ENCODE measurements at regions of chr15 and their contacts with region 1.

Region 1: DNA sequence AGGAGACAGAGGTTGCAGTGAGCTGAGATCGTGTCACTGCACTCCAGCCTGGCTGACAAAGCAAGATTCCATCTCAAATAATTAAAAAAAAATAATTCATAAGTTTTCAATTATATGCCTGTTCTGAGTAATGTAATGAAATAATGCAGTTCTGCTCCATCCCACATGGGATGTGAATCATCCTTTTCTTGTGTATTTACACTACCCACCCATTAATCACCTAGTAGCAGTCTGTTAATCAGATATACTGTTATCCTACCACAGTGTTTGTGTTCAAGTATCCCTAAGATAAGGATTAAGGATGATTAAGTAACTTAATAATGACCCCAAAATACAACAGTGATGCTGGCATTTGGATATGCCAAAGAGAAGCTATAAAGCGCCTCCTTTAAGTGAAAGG is 38.8 kb downstream of the PIGB start:
- DNase-seq: no peak
- H3K4me3 ChIP-seq: no peak overlapping the region
- H3K4me3 Mint-ChIP-seq: no peak overlapping the region
- H3K27ac Mint-ChIP-seq: no peak overlapping the region
- H3K4me1 ChIP-seq: peaks cover 57% of the 10 kb centered on the region
- H3K4me1 Mint-ChIP-seq: peaks cover 43% of the 10 kb centered on the region
- H3K27me3 ChIP-seq: no peaks in the 10 kb centered on the region
- H3K27me3 Mint-ChIP-seq: no peaks in the 10 kb centered on the region
- CTCF ChIP-seq: no peak

Region 2: DNA sequence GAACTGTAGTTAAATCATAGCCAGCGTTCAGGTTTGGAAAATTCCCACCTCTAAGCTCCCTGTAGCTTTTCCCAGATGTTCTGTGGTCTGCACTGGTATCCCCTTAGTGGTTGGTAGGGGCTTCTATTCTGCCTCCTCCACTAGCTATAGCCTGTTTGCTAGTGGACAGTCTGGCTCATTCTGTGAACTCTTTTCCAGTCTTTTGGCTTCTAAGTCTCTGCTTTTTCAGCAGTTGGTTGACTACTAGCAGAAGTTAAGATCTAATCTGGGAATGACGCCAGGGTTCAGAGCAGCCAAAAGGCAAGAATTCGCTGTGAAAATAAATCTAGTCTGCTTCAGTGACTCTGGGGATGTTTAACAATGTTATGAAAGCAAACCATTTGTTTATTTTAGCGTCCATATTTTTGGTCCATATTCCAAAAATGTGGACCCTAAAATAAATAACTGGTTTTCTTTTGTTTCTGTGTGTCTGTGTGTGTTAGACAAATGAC is 1524.6 kb before region 1 on chr15:
- CTCF ChIA-PET with region 1: no interaction called
- POLR2A ChIA-PET with region 1: no interaction called
- intact Hi-C with region 1: loop called (anchors 5 kb)
- DNase-seq: peak in 1 of 2 experiments; percentile 42
- H3K4me3 ChIP-seq: no peak overlapping the region
- H3K4me3 Mint-ChIP-seq: peak overlapping the region; percentile 44
- H3K27ac Mint-ChIP-seq: peak overlapping the region; percentile 91
- H3K4me1 ChIP-seq: peaks cover 86% of the 10 kb centered on the region
- H3K4me1 Mint-ChIP-seq: peaks cover 73% of the 10 kb centered on the region
- H3K27me3 ChIP-seq: no peaks in the 10 kb centered on the region
- H3K27me3 Mint-ChIP-seq: no peaks in the 10 kb centered on the region
- CTCF ChIP-seq: no peak

Region 3: DNA sequence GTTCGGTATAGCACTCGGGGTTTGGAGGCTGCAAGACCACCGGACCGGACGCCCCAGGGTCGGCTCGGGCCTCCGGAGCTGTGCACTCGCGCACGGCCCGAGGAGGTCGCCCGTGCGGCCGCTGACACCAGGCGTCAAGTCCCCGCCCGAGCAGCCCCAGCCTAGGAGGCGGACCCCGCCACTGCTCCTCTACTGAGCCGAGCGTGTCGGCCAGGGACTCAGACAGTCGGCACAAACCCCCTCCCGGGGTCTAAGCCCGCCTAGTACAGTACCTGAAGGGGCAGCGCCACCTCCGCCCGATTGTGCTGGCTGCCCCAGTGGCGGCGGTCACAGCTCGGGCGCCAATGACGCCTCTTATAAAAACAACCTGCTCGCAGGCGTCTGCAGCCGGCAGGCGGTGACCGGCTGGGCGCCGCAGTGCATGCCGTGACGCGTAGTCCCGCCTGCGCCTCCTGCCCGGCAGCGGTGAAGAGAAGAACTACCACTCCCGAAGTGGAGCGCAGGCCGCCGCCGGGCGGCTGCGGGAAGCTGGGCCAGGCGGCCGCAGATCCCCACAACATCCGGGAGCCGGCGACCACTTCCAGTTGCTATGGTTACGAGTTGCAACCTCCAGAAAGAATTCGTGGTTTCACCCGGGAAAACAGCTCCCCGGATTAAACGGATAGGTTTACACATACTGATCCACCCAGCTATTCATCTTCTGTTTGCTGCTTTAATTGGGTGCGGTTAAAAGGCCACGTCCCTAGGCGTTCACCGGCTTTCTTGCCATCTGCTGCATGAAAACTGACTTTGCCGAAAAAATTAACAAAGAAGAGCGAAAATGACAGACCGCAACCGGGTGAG is 50.4 kb after region 1 on chr15 and contains the starts of genes CCPG1 and PIERCE2:
- CTCF ChIA-PET with region 1: interaction called, 13 read pairs
- POLR2A ChIA-PET with region 1: interaction called, 4 read pairs
- intact Hi-C with region 1: loop called (anchors 2 kb)
- DNase-seq: peak; percentile 91 to 95
- H3K4me3 ChIP-seq: peak within 1 kb of the TSS; percentile 59
- H3K4me3 Mint-ChIP-seq: peak within 1 kb of the TSS; percentile 91
- H3K27ac Mint-ChIP-seq: peak within 1 kb of the TSS; percentile 85
- H3K4me1 ChIP-seq: peaks cover 12% of the 10 kb centered on the region
- H3K4me1 Mint-ChIP-seq: peaks cover 7% of the 10 kb centered on the region
- H3K27me3 ChIP-seq: no peaks in the 10 kb centered on the region
- H3K27me3 Mint-ChIP-seq: no peaks in the 10 kb centered on the region
- CTCF ChIP-seq: peak; percentile 68 to 78
- total RNA-seq, gene CCPG1: 51.6 and 54.6 TPM in 2 replicates
- total RNA-seq, gene PIERCE2: 1.3 TPM in 1 of 2 replicates, not detected in the other